Activated CD4-positive, alpha-beta T cell treated with anti-CD3 and anti-CD28 coated beads, Interleukin-2, amount 10 ng/mL, durations not matched to agents 24 days and 14 days (primary cell): ENCODE measurements at regions of chr12 and their contacts with region 1.

Region 1: GRCh38 chr12:48795480-48796455 is 6.9 kb upstream of the ADCY6 start:
- DNase-seq: peak; percentile 87
- H3K4me3 Mint-ChIP-seq: no peak overlapping the region
- H3K27ac Mint-ChIP-seq: no peak overlapping the region
- H3K4me1 Mint-ChIP-seq: peaks cover 3% of the 10 kb centered on the region
- H3K27me3 Mint-ChIP-seq: peaks cover 15% of the 10 kb centered on the region

Region 2: DNA sequence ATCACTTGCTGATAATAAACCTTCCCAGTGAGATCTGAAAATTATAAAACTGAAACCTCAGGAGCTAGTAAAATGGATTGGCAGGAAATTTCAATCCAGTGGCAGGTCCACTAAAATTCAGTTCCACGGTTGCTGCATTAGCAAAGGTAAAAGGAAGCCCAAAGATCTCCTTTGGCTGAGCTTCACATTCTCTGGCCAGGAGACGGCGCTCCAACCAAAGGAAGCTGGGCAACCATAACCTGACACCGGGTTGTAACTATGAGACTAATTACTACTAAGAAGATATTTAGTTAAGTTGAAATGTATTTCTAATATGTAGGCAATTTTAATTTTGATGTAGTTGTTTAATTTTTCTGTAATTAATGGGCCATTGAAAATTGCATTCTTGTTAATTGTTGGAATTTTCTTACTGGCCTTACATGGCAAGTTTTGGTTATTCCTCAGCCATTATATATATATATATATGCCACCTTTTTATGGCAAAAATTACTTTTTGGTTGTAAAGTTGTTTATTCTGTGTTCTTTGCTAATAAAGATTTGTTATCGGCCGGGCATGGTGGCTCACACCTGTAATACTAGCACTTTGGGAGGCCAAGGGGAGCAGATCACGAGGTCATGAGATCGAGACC is 253.4 kb before region 1 on chr12:
- intact Hi-C with region 1: loop called (anchors 5 kb)
- DNase-seq: peak; percentile 80
- H3K4me3 Mint-ChIP-seq: no peak overlapping the region
- H3K27ac Mint-ChIP-seq: no peak overlapping the region
- H3K4me1 Mint-ChIP-seq: peaks cover 3% of the 10 kb centered on the region
- H3K27me3 Mint-ChIP-seq: peaks cover 11% of the 10 kb centered on the region

Region 3: GRCh38 chr12:48758221-48758620 is 37.5 kb before region 1 on chr12:
- intact Hi-C with region 1: loop called (anchors 1 kb)
- DNase-seq: no peak
- H3K4me3 Mint-ChIP-seq: no peak overlapping the region
- H3K27ac Mint-ChIP-seq: no peak overlapping the region
- H3K4me1 Mint-ChIP-seq: no peaks in the 10 kb centered on the region
- H3K27me3 Mint-ChIP-seq: peaks cover 7% of the 10 kb centered on the region

Region 4: DNA sequence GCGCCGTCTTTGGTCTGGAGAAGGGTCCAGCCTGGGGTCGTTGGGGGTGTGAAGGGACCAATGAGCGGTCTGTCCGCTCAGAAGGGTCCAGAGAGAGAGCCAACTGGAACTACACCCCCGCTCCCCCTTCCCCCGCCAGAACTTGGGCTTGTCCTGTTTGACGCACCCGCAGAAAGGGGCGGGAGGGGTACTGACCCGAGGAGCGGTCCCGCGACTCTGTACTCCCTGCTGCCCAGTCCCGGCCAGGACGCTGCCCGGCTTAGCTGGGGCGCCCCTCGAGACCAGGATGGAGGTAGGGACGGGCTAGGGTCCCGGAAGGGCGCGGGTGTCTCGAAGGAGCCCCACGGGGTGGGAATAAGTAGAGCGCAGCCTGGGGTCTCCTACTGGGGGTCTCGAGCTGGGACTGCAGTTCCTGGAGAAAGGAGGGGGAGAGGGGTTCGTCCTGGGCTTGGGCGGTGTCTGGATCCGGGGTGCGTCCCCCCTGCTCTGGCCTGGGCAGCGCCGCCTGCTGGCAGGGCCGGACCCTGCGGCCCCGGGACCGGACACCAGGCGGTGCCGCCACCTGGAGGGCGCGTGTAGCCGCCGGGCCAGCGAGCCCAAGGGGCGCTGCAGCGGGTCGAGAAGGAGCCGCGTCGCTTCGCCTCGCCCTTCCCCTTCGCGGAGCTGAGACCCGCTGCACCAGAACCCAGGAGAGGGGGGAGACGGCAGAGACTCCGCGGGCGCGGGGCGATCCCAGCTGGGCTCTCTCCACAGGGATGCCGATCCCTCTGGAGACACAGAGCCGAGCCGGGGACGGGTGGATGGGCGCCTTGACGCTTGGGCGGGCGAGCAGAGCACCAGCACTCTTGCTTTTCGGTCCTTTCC is 18.7 kb after region 1 on chr12:
- intact Hi-C with region 1: loop called (anchors 2 kb)
- DNase-seq: peak; percentile 96
- H3K4me3 Mint-ChIP-seq: peak overlapping the region; percentile 98
- H3K27ac Mint-ChIP-seq: peak overlapping the region; percentile 88
- H3K4me1 Mint-ChIP-seq: peaks cover 34% of the 10 kb centered on the region
- H3K27me3 Mint-ChIP-seq: peaks cover 26% of the 10 kb centered on the region

Region 5: DNA sequence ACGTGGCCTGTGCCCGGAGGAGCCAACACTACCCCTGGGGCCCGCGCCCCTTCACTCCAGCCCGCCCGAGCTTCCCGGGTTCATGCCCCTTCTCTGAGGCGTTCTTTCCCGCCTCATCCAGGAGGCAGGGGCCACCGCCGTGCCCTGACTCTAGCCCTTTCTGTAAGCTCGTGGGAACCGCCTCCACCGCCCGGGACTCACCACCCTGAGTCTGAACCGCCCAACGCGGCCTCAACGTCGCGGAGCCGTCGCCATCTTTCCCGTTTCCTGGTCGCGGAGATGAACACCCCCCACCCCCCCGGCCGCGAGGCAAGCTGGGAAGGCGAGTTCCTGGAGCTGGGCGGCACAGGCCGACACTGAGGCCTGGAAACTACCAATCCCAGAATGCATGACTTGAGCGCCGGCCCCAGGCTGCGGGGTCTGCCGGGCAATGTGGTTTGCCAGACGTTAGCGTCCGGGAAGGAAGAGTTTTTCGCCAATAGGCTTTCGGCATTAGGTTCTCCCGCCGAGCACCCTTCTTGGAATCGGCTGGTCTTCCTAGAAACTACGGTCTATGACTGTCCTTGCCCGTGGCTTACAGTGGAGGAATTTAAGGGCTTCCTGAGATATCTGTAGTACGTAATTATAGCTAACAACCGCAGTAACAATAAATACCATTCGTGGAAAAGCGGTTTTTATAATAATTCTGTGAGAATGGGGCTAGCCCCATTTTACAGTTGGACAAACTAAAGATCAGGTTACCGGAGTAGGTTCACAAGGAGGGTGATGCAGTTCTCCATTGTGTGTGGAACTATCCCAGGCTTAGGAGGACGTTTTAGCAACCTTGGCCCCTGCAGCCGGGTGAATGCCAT is 56.3 kb after region 1 on chr12 and contains the start of gene DDX23:
- intact Hi-C with region 1: no loop called
- DNase-seq: peak; percentile 97
- H3K4me3 Mint-ChIP-seq: peak within 1 kb of the TSS; percentile 84
- H3K27ac Mint-ChIP-seq: peak within 1 kb of the TSS; percentile 95
- H3K4me1 Mint-ChIP-seq: peaks cover 27% of the 10 kb centered on the region
- H3K27me3 Mint-ChIP-seq: no peaks in the 10 kb centered on the region
- total RNA-seq, gene DDX23: 122 and 126 TPM in 2 replicates